Activated naive CD4-positive, alpha-beta T cell treated with anti-CD3 and anti-CD28 coated beads, Interleukin-2, amount 10 ng/mL, durations not matched to agents 7 days and 5 days (primary cell): ENCODE measurements at regions of chr16 and their contacts with region 1.

Region 1: DNA sequence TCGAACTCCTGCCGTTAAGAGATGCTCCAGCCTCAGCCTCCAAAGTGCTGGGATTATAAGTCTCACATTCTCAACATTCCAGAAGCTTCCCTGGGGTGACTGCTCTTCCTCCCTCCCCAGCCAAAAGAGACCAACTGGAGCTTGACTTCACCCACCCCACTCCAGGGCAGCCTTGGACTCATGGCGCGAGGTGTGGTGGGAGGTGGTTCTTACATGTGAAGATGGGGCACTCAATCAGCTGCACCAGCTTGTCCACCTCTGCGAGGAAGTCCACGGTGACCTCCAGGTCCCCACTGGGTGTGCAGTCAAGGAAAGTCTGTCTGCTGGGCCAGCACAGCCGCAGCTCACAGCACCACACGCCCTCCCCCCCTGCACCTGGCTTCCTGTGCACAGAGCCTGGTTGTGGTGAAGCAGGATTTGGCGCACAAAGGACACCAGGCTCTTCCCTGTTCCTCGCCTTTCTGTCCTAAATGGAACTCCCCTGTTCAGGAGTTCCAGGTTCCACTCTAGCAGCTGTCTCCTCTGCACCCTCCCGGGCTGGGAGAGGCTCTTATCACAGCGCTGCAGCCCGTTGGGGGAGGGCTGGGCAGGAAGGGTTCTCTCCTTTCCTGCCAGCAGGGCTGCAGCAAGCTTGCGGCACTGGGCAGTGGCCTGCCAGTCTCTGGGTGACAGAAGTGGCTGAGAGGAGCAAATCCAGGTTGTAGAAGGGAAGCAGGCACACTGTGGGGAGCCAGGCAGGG is 9.6 kb upstream of the MTSS2 start:
- DNase-seq: peak; percentile 70
- H3K4me3 Mint-ChIP-seq: peak overlapping the region; percentile 64
- H3K27ac Mint-ChIP-seq: peak overlapping the region; percentile 95
- H3K4me1 Mint-ChIP-seq: peaks cover 46% of the 10 kb centered on the region
- H3K27me3 Mint-ChIP-seq: no peaks in the 10 kb centered on the region

Region 2: GRCh38 chr16:70298988-70299938 is 396.2 kb before region 1 on chr16 and contains the start of gene DDX19B:
- CTCF ChIA-PET with region 1: no interaction called
- DNase-seq: peak; percentile 82
- H3K4me3 Mint-ChIP-seq: peak within 1 kb of the TSS; percentile 97
- H3K27ac Mint-ChIP-seq: peak within 1 kb of the TSS; percentile 98
- H3K4me1 Mint-ChIP-seq: peaks cover 42% of the 10 kb centered on the region
- H3K27me3 Mint-ChIP-seq: no peaks in the 10 kb centered on the region

Region 3: DNA sequence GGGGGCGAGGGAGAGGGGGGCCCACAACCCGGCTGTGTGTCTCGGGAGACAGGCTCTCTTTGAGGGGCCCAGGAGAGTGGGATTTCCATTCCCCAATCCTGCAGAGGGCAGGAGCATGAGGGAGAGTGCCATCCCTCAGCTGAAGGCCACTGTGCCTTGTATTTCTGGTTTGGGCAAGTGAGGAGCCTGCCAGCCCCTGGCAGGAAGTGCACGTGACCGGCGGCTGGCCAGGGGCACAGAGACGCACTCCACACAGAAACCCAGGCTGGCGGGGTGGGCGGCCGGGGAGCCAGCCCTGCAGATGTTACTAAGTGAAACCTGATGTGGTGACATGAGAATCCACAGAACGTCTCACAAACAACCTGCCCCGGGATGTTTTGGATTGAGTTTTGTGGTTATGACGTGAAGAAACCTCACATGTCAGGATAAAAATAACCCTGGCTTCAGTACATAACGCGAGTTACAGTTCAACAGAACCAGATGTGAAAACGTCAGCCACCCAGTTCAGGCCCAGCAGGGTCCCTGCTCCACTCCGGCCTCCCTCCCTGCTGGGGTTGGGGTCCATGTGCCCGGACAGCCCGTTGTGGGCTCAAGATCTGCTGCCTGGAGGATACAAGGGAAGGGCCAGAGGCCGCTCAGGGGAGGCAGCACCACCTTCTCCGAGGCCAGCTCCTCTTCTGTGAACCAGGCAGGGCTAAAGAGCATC is 42.0 kb after region 1 on chr16:
- CTCF ChIA-PET with region 1: interaction called, 12 read pairs
- DNase-seq: peak; percentile 93
- H3K4me3 Mint-ChIP-seq: peak overlapping the region; percentile 79
- H3K27ac Mint-ChIP-seq: peak overlapping the region; percentile 100
- H3K4me1 Mint-ChIP-seq: peaks cover 89% of the 10 kb centered on the region
- H3K27me3 Mint-ChIP-seq: no peaks in the 10 kb centered on the region